ENCODE measurements at regions of chr5 and their contacts with region 1.

Region 1: GRCh38 chr5:155211764-155212163 is 198.2 kb downstream of the KIF4B start:
- DNase-seq: no peak
- ATAC-seq: no peak

Region 2: DNA sequence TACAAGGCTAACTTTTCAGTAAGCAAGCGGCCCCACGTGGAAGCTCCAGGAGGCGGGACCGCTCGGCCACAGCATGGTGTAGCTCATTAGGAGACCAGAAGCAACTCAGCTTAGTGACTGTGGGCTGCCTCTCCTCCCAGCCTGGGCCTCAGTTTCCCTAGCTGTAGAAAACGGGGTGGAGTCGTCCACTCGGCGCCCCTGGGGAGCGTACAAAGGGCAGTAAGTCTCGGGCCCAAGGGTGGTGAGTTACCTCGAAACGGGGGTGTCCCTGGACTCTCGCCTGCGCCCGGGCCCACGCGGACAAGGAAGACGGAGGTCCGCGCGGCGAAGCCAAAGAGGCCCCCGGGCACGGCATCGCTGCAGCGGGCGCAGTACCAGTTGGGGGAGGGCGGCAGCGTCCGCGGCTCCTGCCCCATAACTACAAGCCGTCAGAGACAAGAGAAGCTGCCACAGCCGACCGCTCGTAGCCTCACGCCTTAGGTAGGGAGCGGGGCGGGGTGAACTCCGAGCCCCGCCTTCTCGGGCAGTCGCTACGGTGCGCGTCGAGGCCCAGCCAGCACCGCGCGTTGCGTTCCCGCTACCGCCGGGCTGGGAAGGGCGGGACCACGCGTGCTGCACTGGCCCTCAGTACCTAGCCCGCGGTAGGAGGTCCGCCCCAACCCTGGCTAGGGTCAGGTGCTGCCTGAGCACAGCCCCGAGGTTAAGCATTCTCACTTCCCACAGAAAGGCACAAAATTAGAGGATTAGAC is 273.9 kb before region 1 on chr5 and contains the start of gene GEMIN5:
- intact Hi-C with region 1: no loop called
- DNase-seq: peak; percentile 92
- ATAC-seq: peak; percentile 96
- total RNA-seq, gene GEMIN5: 13.0 TPM

Region 3: DNA sequence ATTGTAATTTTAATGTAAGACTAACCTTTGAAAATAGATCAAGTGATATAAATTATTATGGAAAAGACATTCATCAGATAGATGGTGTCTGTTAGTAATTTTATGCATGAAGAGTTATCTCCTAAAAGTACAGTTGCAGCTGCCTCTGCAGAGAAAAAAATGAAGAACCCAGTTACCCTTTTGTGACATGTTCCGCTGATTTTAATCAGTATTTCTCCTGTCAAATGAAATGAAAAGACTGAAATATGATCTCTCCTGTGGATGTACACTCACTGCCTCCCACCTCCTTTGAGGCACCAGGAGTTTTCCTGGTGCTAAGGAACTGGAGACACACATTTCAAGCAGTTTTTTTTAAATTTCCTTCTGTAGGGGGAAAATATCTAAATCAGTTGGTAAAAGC is 79.2 kb after region 1 on chr5:
- intact Hi-C with region 1: loop called (anchors 5 kb)
- DNase-seq: no peak
- ATAC-seq: no peak